Calu3 (cell line): ENCODE measurements at regions of chr5 and their contacts with region 1.

Region 1: GRCh38 chr5:164921722-164922121 is 1416.3 kb downstream of the MAT2B start:
- DNase-seq: no peak
- H3K4me3 Mint-ChIP-seq: no peak overlapping the region
- H3K27ac Mint-ChIP-seq: no peak overlapping the region
- H3K4me1 Mint-ChIP-seq: no peaks in the 10 kb centered on the region
- H3K27me3 Mint-ChIP-seq: no peaks in the 10 kb centered on the region
- CTCF ChIP-seq: no peak

Region 2: DNA sequence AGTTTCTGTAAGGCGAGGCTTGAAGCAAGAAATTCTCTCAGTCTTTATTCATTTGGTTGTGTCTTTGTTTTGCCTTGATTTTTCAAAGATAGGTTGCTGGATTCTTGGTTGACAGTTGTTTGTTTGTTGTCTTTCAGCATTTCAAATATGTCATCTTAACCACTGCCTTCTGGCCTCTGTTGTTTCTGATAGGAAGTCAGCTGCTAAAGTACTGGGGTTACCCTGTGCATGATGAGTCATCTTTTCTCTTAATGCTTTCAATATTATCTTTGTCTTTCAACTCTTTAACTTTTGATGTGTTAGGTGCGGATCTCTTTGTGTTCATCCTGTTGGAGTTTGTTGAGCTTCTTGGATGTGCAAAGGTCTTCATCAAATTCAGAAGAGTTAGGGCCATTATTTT is 155.0 kb after region 1 on chr5:
- CTCF ChIA-PET with region 1: interaction called, 14 read pairs
- intact Hi-C with region 1: no loop called
- DNase-seq: no peak
- H3K4me3 Mint-ChIP-seq: no peak overlapping the region
- H3K27ac Mint-ChIP-seq: no peak overlapping the region
- H3K4me1 Mint-ChIP-seq: no peaks in the 10 kb centered on the region
- H3K27me3 Mint-ChIP-seq: no peaks in the 10 kb centered on the region
- CTCF ChIP-seq: no peak